ENCODE measurements at regions of chr6 and their contacts with region 1.

Region 1: DNA sequence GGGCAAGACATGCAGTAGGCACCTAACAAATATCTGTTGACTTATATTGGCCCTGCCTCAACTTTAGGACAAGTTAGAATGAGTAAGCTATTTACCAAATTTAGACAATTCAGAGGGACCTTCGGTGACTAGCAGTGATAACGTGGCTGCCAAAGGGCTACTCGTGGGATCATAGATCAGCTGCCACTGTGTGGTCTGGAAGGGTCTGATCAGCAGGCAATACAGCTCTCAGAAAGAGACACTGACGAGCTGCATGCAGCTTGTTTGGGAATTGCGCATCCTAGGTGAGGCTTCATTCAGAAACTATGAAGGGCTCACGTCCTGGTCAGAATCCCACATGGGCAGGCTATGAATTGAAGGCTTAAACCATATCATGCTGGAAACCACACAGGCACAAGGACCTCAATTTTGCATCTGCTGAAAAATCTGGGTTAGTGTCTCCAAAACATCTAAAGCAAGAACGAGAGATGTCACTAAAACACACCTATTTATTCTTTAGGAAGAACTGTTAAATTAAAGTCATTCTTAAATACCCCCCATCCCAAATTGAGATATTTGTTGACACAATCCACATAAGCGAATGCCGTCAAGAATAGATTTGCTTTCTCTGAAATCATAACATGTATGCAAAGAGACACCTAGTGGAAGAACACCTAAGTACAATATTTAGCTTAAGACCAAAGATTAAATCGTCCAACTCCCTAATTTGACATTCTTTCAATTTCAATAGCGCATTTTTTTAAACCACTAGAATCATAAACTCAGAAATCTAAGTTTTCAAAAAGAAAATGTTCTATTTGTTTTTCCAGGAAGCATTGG is 79.6 kb downstream of the IPCEF1 start:
- DNase-seq: no peak
- ATAC-seq: peak; percentile 75
- H3K4me3 Mint-ChIP-seq: peak overlapping the region; percentile 40
- H3K27ac Mint-ChIP-seq: no peak overlapping the region
- H3K4me1 Mint-ChIP-seq: peaks cover 14% of the 10 kb centered on the region
- H3K27me3 Mint-ChIP-seq: peaks cover 5% of the 10 kb centered on the region

Region 2: GRCh38 chr6:154127657-154128056 is 149.4 kb before region 1 on chr6:
- CTCF ChIA-PET with region 1: no interaction called
- DNase-seq: no peak
- ATAC-seq: no peak
- H3K4me3 Mint-ChIP-seq: no peak overlapping the region
- H3K27ac Mint-ChIP-seq: no peak overlapping the region
- H3K4me1 Mint-ChIP-seq: no peaks in the 10 kb centered on the region
- H3K27me3 Mint-ChIP-seq: peaks cover 2% of the 10 kb centered on the region

Region 3: DNA sequence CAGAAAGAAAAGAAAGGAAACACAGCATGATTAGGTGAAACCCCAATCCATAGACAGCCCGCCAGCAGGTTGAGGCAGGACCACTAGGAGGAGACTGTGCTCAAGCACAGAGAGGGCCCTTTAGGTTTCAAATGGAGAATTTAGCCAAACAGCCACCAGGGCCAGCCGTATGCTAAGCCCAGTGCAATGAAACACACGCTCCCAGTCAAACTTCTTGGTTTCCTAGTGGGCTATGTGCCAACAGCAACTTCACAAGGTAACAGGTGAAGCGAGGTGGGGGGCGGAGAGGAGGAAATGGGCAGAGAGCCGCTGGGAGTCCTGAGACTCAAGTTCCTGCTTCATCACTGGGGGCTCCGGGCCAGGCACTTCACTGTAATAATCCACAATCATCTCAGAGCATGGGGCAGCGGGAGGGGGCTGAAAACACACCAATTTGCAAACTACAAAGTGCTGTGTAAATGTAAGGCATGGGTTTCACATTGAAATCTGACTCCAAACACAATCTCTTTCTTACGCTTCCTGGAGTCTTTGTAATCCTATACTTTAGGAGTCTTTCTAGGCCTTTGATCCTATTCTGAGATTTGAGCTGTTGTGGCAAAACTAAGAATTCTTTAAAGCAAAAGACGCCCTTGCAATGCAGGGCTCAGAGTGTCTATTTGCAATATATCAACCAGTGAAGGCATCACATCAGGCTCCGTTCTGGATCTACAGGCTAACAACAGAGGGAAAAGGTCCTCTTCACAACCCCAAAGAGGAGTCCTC is 120.7 kb before region 1 on chr6:
- CTCF ChIA-PET with region 1: interaction called, 81 read pairs
- DNase-seq: peak; percentile 81
- ATAC-seq: peak; percentile 98
- H3K4me3 Mint-ChIP-seq: peak overlapping the region; percentile 71
- H3K27ac Mint-ChIP-seq: peak overlapping the region; percentile 83
- H3K4me1 Mint-ChIP-seq: peaks cover 26% of the 10 kb centered on the region
- H3K27me3 Mint-ChIP-seq: no peaks in the 10 kb centered on the region

Region 4: GRCh38 chr6:154164397-154165165 is 112.4 kb before region 1 on chr6:
- CTCF ChIA-PET with region 1: interaction called, 81 read pairs
- DNase-seq: no peak
- ATAC-seq: no peak
- H3K4me3 Mint-ChIP-seq: no peak overlapping the region
- H3K27ac Mint-ChIP-seq: no peak overlapping the region
- H3K4me1 Mint-ChIP-seq: peaks cover 8% of the 10 kb centered on the region
- H3K27me3 Mint-ChIP-seq: no peaks in the 10 kb centered on the region

Region 5: DNA sequence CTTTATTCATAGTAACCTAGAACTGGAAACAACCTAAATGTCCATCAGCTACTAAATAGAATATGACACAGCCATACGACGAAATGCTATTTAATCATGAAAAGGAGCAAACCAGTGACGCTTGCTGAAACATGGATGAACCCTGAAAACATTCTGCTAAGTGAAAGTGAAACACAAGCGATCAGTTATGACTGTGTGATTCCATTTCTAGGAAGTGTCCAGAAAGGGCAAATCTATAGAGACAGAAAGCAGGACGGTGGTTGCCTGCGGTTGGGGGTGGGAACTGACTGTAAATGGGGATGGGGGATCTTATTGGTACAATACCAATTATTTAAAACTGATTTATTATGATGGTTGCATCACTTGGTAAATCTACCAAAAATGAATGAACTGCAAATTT is 47.2 kb before region 1 on chr6:
- CTCF ChIA-PET with region 1: interaction called, 13 read pairs
- DNase-seq: peak; percentile 86
- ATAC-seq: peak; percentile 86
- H3K4me3 Mint-ChIP-seq: peak overlapping the region; percentile 79
- H3K27ac Mint-ChIP-seq: peak overlapping the region; percentile 90
- H3K4me1 Mint-ChIP-seq: peaks cover 58% of the 10 kb centered on the region
- H3K27me3 Mint-ChIP-seq: no peaks in the 10 kb centered on the region

Region 6: DNA sequence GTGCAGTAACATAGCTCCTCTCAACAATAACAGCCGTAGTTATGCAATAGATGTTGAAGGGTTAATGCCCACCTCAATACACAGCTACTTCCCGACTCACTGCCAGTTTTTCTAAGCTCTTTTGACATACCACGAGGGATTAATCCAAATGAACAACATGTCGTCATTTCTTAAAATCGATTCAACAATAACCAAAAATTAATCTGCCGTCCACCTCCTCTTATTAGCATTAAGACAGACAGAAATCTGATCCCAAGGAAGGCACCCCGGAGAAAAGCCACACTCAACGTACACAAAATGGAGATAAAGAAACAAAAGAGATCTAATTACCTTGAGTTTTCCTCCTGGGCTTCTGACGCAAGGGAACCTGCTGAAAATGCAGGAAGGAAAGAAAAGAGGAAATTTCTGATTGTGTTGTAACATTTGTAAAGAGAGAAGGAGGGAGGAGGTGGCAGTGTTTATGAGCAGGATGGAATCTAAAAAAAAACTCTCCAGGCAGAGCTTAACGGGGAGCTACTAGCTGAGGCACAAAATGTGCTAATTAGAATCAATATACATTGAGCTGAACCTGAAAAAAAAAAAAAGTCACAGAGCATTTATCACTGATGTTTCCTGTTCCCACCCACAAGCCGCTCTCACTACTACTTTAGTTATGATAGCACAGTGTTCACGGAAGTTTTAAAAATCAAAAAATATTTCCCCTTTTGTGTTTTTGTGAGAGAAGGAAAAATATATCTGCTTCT is 29.7 kb before region 1 on chr6:
- CTCF ChIA-PET with region 1: interaction called, 34 read pairs
- DNase-seq: peak; percentile 68
- ATAC-seq: peak; percentile 67
- H3K4me3 Mint-ChIP-seq: peak overlapping the region; percentile 91
- H3K27ac Mint-ChIP-seq: peak overlapping the region; percentile 95
- H3K4me1 Mint-ChIP-seq: peaks cover 83% of the 10 kb centered on the region
- H3K27me3 Mint-ChIP-seq: no peaks in the 10 kb centered on the region

Region 7: GRCh38 chr6:154252678-154253077 is 24.3 kb before region 1 on chr6:
- CTCF ChIA-PET with region 1: interaction called, 34 read pairs
- DNase-seq: no peak
- ATAC-seq: no peak
- H3K4me3 Mint-ChIP-seq: no peak overlapping the region
- H3K27ac Mint-ChIP-seq: no peak overlapping the region
- H3K4me1 Mint-ChIP-seq: peaks cover 51% of the 10 kb centered on the region
- H3K27me3 Mint-ChIP-seq: no peaks in the 10 kb centered on the region

Measured in activated CD8-positive, alpha-beta memory T cell treated with anti-CD3 and anti-CD28 coated beads, Interleukin-2, amount 10 ng/mL, durations not matched to agents 7 days and 5 days (primary cell).